ENCODE measurements at regions of chr5 and their contacts with region 1.

Region 1: GRCh38 chr5:177403792-177404640 is 3.6 kb upstream of the PFN3 start:
- DNase-seq: peak; percentile 89
- H3K4me3 Mint-ChIP-seq: peak overlapping the region; percentile 87
- H3K27ac Mint-ChIP-seq: peak overlapping the region; percentile 85
- H3K4me1 Mint-ChIP-seq: peaks cover 25% of the 10 kb centered on the region
- H3K27me3 Mint-ChIP-seq: no peaks in the 10 kb centered on the region
- CTCF ChIP-seq: peak; percentile 88

Region 2: GRCh38 chr5:177256296-177256695 is 147.7 kb before region 1 on chr5:
- CTCF ChIA-PET with region 1: no interaction called
- POLR2A ChIA-PET with region 1: no interaction called
- intact Hi-C with region 1: no loop called
- DNase-seq: peak; percentile 48
- H3K4me3 Mint-ChIP-seq: no peak overlapping the region
- H3K27ac Mint-ChIP-seq: peak overlapping the region; percentile 60
- H3K4me1 Mint-ChIP-seq: peaks cover 11% of the 10 kb centered on the region
- H3K27me3 Mint-ChIP-seq: no peaks in the 10 kb centered on the region
- CTCF ChIP-seq: no peak

Region 3: DNA sequence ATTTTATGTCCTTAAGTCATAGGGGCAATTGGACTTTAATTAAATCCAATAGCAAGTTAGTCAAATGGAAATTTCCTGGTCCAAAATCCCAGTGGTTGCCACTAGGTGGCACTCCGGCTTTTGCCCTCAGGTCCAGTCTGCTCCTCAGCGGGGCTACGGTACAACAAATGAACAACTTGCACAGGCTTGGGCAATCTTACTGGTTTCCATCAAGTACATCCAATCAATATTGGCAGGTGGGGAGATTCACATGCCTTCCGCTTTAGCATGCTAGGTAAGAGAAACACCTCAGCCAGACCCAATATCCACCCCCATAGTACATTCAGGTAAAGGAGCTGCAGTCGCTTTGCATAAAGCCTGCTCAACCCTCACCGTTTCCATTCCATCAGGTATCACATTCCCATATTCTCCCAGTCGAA is 86.0 kb before region 1 on chr5:
- CTCF ChIA-PET with region 1: interaction called, 34 read pairs
- POLR2A ChIA-PET with region 1: interaction called, 4 read pairs
- intact Hi-C with region 1: loop called (anchors 1 kb)
- DNase-seq: peak; percentile 85
- H3K4me3 Mint-ChIP-seq: no peak overlapping the region
- H3K27ac Mint-ChIP-seq: no peak overlapping the region
- H3K4me1 Mint-ChIP-seq: no peaks in the 10 kb centered on the region
- H3K27me3 Mint-ChIP-seq: no peaks in the 10 kb centered on the region
- CTCF ChIP-seq: peak; percentile 92

Region 4: GRCh38 chr5:177370488-177371119 is 33.4 kb before region 1 on chr5:
- CTCF ChIA-PET with region 1: interaction called, 87 read pairs
- POLR2A ChIA-PET with region 1: interaction called, 7 read pairs
- intact Hi-C with region 1: loop called (anchors 1 kb)
- DNase-seq: peak; percentile 96
- H3K4me3 Mint-ChIP-seq: peak overlapping the region; percentile 76
- H3K27ac Mint-ChIP-seq: no peak overlapping the region
- H3K4me1 Mint-ChIP-seq: peaks cover 24% of the 10 kb centered on the region
- H3K27me3 Mint-ChIP-seq: no peaks in the 10 kb centered on the region
- CTCF ChIP-seq: peak; percentile 60

Region 5: GRCh38 chr5:177425801-177426565 is 22.0 kb after region 1 on chr5:
- CTCF ChIA-PET with region 1: interaction called, 134 read pairs
- POLR2A ChIA-PET with region 1: interaction called, 92 read pairs
- intact Hi-C with region 1: loop called (anchors 1 kb)
- DNase-seq: peak; percentile 100
- H3K4me3 Mint-ChIP-seq: peak overlapping the region; percentile 89
- H3K27ac Mint-ChIP-seq: peak overlapping the region; percentile 99
- H3K4me1 Mint-ChIP-seq: peaks cover 22% of the 10 kb centered on the region
- H3K27me3 Mint-ChIP-seq: no peaks in the 10 kb centered on the region
- CTCF ChIP-seq: no peak

Region 6: DNA sequence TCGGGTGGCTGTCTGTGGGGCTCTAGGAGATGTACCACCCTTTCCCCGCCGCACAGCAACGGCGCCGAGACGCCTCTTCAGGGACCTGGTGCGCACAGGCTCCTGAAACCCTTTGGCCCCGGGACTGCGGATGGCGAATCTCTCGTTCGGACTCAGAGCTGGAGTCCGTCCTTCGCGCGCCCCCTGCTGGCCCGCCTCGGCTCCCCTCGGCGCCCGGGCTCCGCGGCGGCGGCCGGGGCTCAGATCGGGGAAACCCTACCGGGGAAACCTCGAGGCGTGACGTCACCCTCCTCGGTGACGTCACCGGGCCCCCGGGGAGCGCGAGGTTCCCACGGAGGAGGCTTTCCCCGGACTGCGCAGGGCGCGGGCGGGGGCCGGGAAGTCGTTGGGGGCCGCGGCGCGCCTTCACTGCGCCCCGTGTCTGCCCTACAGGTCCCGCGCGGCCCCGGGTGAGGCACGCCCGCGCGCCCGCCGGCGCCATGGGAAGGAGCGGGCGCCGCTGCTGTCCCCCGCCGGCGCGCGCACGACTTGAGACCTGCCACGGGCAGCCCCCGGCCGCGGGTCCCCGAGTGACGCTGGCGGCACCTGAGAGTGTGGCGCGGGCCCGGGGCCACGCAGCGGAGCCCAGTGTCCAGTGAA is 50.5 kb after region 1 on chr5:
- CTCF ChIA-PET with region 1: interaction called, 277 read pairs
- POLR2A ChIA-PET with region 1: interaction called, 202 read pairs
- intact Hi-C with region 1: loop called (anchors 1 kb)
- DNase-seq: peak; percentile 93
- H3K4me3 Mint-ChIP-seq: peak overlapping the region; percentile 70
- H3K27ac Mint-ChIP-seq: no peak overlapping the region
- H3K4me1 Mint-ChIP-seq: peaks cover 6% of the 10 kb centered on the region
- H3K27me3 Mint-ChIP-seq: no peaks in the 10 kb centered on the region
- CTCF ChIP-seq: peak; percentile 98

Measured in MCF 10A (cell line).